ENCODE measurements at regions of chr2 and their contacts with region 1.

Region 1: GRCh38 chr2:219155054-219155644 is 5.5 kb downstream of the NHEJ1 start:
- DNase-seq: peak; percentile 64
- CTCF ChIP-seq: peak; percentile 49

Region 2: GRCh38 chr2:218979846-218980734 is 175.1 kb before region 1 on chr2:
- CTCF ChIA-PET with region 1: interaction called, 24 read pairs
- POLR2A ChIA-PET with region 1: no interaction called
- DNase-seq: peak; percentile 86
- CTCF ChIP-seq: peak; percentile 98

Region 3: GRCh38 chr2:218995972-218996711 is 159.0 kb before region 1 on chr2:
- CTCF ChIA-PET with region 1: interaction called, 24 read pairs
- POLR2A ChIA-PET with region 1: no interaction called
- DNase-seq: peak; percentile 88
- CTCF ChIP-seq: peak; percentile 92

Region 4: GRCh38 chr2:219073413-219074129 is 81.6 kb before region 1 on chr2:
- CTCF ChIA-PET with region 1: interaction called, 21 read pairs
- POLR2A ChIA-PET with region 1: no interaction called
- DNase-seq: peak; percentile 67
- CTCF ChIP-seq: peak; percentile 55

Region 5: DNA sequence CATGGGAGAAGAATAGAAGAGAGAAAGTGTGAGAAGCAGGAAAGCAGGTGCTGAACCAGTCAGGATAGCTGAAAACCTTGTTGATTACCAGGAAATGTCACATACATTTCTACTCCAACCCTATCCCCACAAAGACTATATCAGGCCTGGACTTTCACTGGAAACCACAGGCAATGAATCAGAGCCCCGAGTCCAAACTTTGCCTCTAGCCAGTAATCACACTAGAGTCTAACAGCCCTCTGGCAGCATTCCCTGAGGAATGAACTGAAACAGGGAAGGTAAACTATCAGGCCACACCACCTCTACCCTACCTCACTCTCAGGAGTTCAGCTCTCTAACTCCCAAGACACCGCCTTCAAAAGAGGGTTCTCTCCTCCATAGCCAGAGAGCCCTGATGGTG is 75.7 kb before region 1 on chr2:
- CTCF ChIA-PET with region 1: interaction called, 18 read pairs
- POLR2A ChIA-PET with region 1: no interaction called
- DNase-seq: no peak
- CTCF ChIP-seq: no peak

Region 6: GRCh38 chr2:219133976-219134375 is 21.2 kb before region 1 on chr2:
- CTCF ChIA-PET with region 1: interaction called, 10 read pairs
- POLR2A ChIA-PET with region 1: no interaction called
- DNase-seq: no peak
- CTCF ChIP-seq: no peak

Region 7: GRCh38 chr2:219142329-219142728 is 12.8 kb before region 1 on chr2:
- CTCF ChIA-PET with region 1: interaction called, 10 read pairs
- POLR2A ChIA-PET with region 1: no interaction called
- DNase-seq: no peak
- CTCF ChIP-seq: no peak

Measured in GM10248 (cell line).